ENCODE measurements at regions of chr5 and their contacts with region 1.

Region 1: GRCh38 chr5:101942321-101943215 is 353.5 kb downstream of the SLCO4C1 start:
- H3K4me3 ChIP-seq: no peak overlapping the region
- H3K27ac ChIP-seq: no peak overlapping the region
- H3K4me1 ChIP-seq: no peaks in the 10 kb centered on the region
- CTCF ChIP-seq: peak; percentile 29; the same call in 1 of the 2 replicates

Region 2: DNA sequence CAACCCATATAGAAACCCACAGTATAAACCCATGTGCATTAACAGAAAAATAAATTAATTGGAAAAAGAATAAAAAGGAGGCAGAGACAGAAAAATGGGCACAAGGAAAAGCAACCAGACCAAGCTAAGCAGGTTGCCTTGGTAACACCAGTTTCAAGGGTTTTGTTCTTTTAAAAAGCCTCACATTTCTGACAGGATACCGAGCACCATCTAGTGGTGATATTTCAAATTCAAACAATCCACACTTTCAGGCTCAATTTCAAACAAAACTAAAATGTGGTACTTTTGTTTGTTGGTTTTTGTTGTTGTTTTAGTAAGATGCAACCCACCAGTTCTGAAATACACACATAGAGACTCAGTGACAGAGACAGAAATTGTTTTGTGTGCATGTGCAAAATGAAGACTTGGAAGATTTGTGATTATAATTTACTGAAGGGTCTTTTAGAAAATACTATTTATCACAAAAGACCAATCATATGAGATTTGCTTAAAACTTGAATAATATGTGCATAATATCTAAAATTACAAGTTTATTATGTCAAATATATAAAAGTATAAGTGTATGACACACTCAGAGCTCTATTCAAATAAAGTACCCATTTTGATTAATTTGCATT is 35.3 kb after region 1 on chr5:
- CTCF ChIA-PET with region 1: interaction called, 21 read pairs
- POLR2A ChIA-PET with region 1: no interaction called
- H3K4me3 ChIP-seq: no peak overlapping the region
- H3K27ac ChIP-seq: no peak overlapping the region
- H3K4me1 ChIP-seq: no peaks in the 10 kb centered on the region
- CTCF ChIP-seq: no peak

Region 3: DNA sequence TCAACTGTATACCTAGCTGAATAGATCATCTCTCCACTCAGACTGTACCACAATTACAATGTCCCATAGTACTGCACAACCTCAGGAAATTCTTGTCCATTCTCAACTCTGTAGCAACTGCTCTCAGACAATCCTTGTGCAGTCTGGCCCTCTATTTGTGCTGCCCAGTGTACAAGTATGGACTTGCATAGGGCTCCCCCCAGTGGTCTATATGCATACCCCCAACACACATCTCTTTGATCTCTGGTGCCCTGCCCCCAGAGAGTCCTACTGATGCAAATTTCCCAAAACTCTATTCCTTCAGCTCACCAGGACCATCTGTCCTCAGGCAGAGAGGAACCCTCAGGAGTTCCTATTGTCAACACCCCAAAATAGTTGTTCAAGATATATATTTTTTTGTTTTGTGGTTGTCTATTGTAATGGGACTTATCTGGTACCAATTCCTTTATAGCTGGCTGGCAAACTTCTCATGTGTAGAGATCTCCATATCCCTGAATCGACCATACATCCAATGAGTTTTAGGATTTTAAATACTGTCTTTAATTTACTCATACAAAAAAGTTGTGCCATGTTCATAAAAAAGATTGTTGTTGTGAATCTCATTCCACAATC is 148.3 kb after region 1 on chr5:
- CTCF ChIA-PET with region 1: interaction called, 14 read pairs
- POLR2A ChIA-PET with region 1: no interaction called
- H3K4me3 ChIP-seq: no peak overlapping the region
- H3K27ac ChIP-seq: no peak overlapping the region
- H3K4me1 ChIP-seq: no peaks in the 10 kb centered on the region
- CTCF ChIP-seq: peak; percentile 49

Region 4: GRCh38 chr5:102153003-102153759 is 210.6 kb after region 1 on chr5:
- CTCF ChIA-PET with region 1: interaction called, 25 read pairs
- POLR2A ChIA-PET with region 1: no interaction called
- H3K4me3 ChIP-seq: no peak overlapping the region
- H3K27ac ChIP-seq: peak overlapping the region; percentile 6; the same call in 1 of the 2 replicates
- H3K4me1 ChIP-seq: peaks cover 5% of the 10 kb centered on the region
- CTCF ChIP-seq: peak; percentile 43; the same call in 1 of the 2 replicates